SK-N-SH (cell line): ENCODE measurements at regions of chr20 and their contacts with region 1.

Region 1: GRCh38 chr20:1108437-1108920 is 9.9 kb upstream of the PSMF1 start:
- DNase-seq: peak; percentile 73
- H3K4me3 ChIP-seq: no peak overlapping the region; a peak in 1 of 4 replicates
- H3K27ac ChIP-seq: no peak overlapping the region
- H3K4me1 ChIP-seq: no peaks in the 10 kb centered on the region; a peak in 1 of 4 replicates
- H3K27me3 ChIP-seq: no peaks in the 10 kb centered on the region
- CTCF ChIP-seq: peak; percentile 72
- EP300 ChIP-seq: no peak
- RAD21 ChIP-seq: peak; percentile 78

Region 2: DNA sequence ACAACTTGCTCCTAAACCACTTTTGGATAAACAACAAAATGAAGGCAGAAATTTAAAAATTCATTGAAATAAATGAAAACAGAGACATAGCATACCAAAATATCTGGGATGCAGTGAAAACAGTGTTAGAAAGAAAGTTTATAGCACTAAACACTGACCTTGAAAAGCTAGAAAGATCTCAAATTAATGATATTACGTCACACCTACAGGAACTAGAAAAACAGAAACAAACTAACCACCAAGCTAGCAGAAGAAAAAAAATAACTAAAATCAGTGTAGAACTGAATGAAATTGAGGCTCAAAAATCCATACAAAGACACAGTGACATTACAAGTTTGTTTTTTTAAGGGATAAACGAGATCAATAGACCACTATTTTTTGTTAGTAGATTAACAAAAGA is 924.2 kb before region 1 on chr20:
- CTCF ChIA-PET with region 1: no interaction called
- POLR2A ChIA-PET with region 1: no interaction called
- DNase-seq: no peak
- H3K4me3 ChIP-seq: no peak overlapping the region
- H3K27ac ChIP-seq: no peak overlapping the region
- H3K4me1 ChIP-seq: no peaks in the 10 kb centered on the region
- H3K27me3 ChIP-seq: peaks cover 6% of the 10 kb centered on the region; the same call in 1 of the 2 replicates
- CTCF ChIP-seq: no peak
- EP300 ChIP-seq: no peak
- RAD21 ChIP-seq: no peak

Region 3: DNA sequence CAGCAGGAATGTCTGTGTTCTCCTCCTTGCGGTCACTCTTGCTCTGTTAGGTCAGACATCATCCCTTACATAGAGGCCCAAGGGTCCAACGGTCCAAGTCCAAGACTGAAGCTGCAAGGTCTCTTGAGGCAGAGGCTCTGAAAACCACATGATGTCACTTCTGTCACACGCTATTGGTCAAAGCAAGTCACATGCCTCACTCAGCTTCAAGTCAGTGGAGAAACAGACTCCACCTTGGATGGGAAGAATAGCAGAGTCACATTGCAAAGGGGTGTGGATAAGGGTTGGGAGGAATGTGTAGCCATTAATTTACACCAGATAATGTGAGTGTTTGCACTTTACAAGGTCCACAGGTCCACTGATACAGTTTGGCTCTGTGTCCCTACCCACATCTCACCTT is 357.7 kb before region 1 on chr20:
- CTCF ChIA-PET with region 1: no interaction called
- POLR2A ChIA-PET with region 1: no interaction called
- DNase-seq: no peak
- H3K4me3 ChIP-seq: no peak overlapping the region
- H3K27ac ChIP-seq: no peak overlapping the region
- H3K4me1 ChIP-seq: no peaks in the 10 kb centered on the region
- H3K27me3 ChIP-seq: no peaks in the 10 kb centered on the region; the same call in 1 of the 2 replicates
- CTCF ChIP-seq: no peak
- EP300 ChIP-seq: no peak
- RAD21 ChIP-seq: no peak

Region 4: GRCh38 chr20:967796-968742 is 140.4 kb before region 1 on chr20:
- CTCF ChIA-PET with region 1: interaction called, 35 read pairs
- POLR2A ChIA-PET with region 1: no interaction called
- DNase-seq: peak; percentile 62
- H3K4me3 ChIP-seq: no peak overlapping the region
- H3K27ac ChIP-seq: no peak overlapping the region
- H3K4me1 ChIP-seq: no peaks in the 10 kb centered on the region; a peak in 1 of 4 replicates
- H3K27me3 ChIP-seq: peaks cover 11% of the 10 kb centered on the region; the same call in 1 of the 2 replicates
- CTCF ChIP-seq: no peak
- EP300 ChIP-seq: no peak
- RAD21 ChIP-seq: no peak

Region 5: DNA sequence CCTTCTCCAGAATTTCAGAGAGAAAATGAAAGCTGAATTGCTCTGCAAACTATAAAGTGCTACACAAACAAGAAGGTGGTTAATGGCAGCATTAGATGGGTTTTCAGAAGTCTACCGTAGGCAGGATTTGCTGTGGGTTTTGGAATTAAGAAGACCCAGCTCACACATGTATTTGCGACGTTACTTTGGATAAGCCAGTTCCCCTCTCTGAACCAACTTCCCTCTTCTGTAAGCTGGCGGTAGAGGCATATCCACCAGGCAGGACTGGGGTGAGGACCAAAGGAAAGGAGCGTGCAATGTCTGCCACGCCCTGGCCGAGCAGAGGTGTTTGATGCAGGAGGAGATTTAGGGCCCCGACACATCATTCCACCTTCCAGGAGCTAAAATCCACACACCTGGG is 113.3 kb before region 1 on chr20:
- CTCF ChIA-PET with region 1: interaction called, 10 read pairs
- POLR2A ChIA-PET with region 1: no interaction called
- DNase-seq: no peak
- H3K4me3 ChIP-seq: no peak overlapping the region
- H3K27ac ChIP-seq: no peak overlapping the region
- H3K4me1 ChIP-seq: no peaks in the 10 kb centered on the region
- H3K27me3 ChIP-seq: peaks cover 3% of the 10 kb centered on the region; the same call in 1 of the 2 replicates
- CTCF ChIP-seq: no peak
- EP300 ChIP-seq: no peak
- RAD21 ChIP-seq: no peak

Region 6: GRCh38 chr20:1094751-1095150 is 13.7 kb before region 1 on chr20:
- CTCF ChIA-PET with region 1: interaction called, 55 read pairs
- POLR2A ChIA-PET with region 1: no interaction called
- DNase-seq: peak; percentile 42
- H3K4me3 ChIP-seq: no peak overlapping the region
- H3K27ac ChIP-seq: peak overlapping the region in 1 of 2 experiments; percentile 40; a peak in 2 of 4 replicates
- H3K4me1 ChIP-seq: peaks cover 0 to 10% of the 10 kb centered on the region in 2 experiments; a peak in 2 of 4 replicates
- H3K27me3 ChIP-seq: no peaks in the 10 kb centered on the region
- CTCF ChIP-seq: no peak
- EP300 ChIP-seq: no peak; a peak in 1 of 4 replicates
- RAD21 ChIP-seq: no peak

Region 7: GRCh38 chr20:1150218-1150617 is 41.7 kb after region 1 on chr20:
- CTCF ChIA-PET with region 1: interaction called, 18 read pairs
- POLR2A ChIA-PET with region 1: no interaction called
- DNase-seq: no peak
- H3K4me3 ChIP-seq: no peak overlapping the region
- H3K27ac ChIP-seq: no peak overlapping the region
- H3K4me1 ChIP-seq: no peaks in the 10 kb centered on the region
- H3K27me3 ChIP-seq: no peaks in the 10 kb centered on the region
- CTCF ChIP-seq: no peak
- EP300 ChIP-seq: no peak
- RAD21 ChIP-seq: no peak

Region 8: GRCh38 chr20:1353956-1354355 is 245.5 kb after region 1 on chr20:
- CTCF ChIA-PET with region 1: no interaction called
- POLR2A ChIA-PET with region 1: no interaction called
- DNase-seq: no peak
- H3K4me3 ChIP-seq: no peak overlapping the region
- H3K27ac ChIP-seq: no peak overlapping the region
- H3K4me1 ChIP-seq: no peaks in the 10 kb centered on the region; a peak in 1 of 4 replicates
- H3K27me3 ChIP-seq: no peaks in the 10 kb centered on the region
- CTCF ChIP-seq: no peak
- EP300 ChIP-seq: no peak
- RAD21 ChIP-seq: no peak